Ascending aorta (tissue), 2 donors: ENCODE measurements at regions of chr16 and their contacts with region 1.

Region 1: GRCh38 chr16:30902029-30902972 is 5.9 kb downstream of the CTF1 start:
- DNase-seq: peak in 1 of 2 donors; percentile 80
- H3K4me3 ChIP-seq: peak overlapping the region; percentile 76 to 82
- H3K27ac ChIP-seq: peak overlapping the region; percentile 86 to 92
- H3K4me1 ChIP-seq: peaks cover 4 to 5% of the 10 kb centered on the region in 2 donors
- H3K27me3 ChIP-seq: no peaks in the 10 kb centered on the region
- CTCF ChIP-seq: peak in 1 of 3 experiments; percentile 75

Region 2: DNA sequence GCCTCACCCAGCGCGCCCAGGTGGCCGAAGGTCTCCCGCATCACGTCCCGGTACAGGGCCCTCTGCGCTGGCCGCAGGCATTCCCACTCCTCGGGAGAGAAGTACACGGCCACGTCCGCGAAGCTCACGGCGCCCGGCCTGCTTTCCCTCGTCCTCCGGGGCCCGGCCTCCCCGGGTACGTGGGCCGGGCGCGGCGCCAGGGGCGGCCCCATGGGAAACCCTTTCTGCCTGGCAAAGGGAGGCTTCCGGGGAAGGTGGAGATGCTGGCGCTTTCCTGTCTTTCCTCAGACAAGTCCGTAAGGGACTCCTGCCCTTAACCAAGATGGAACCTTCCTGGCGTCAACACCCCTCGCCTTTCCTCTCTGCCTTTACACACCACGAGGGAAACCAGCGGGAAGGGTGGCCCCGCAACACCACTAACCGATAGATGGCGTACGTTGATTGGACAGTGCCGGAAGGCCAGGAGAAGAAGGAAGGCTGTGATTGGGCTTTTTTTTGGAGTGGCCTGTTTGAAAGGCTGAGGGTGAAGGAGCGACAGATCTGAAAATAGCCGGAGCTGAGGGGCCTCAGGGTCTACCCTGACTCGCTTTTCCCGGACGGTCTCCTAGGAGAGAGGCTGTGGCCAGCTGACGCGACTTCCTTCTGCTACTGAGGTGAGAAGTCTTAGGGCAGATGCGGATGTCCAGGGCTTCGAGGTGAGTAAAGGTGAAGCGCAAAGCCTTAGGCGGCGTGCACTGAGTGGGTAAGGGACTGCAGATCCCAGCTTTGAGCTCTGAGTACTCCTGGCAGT is 316.7 kb before region 1 on chr16 and contains the start of gene ZNF785:
- intact Hi-C with region 1: no loop called
- DNase-seq: peak; percentile 97 to 99
- H3K4me3 ChIP-seq: peak within 1 kb of the TSS; percentile 82 to 90
- H3K27ac ChIP-seq: peak within 1 kb of the TSS; percentile 92 to 93
- H3K4me1 ChIP-seq: peaks cover 0 to 16% of the 10 kb centered on the region in 2 donors
- H3K27me3 ChIP-seq: no peaks in the 10 kb centered on the region
- CTCF ChIP-seq: peak in 2 of 3 experiments; percentile 17 to 23
- total RNA-seq, gene ZNF785: 12.1 TPM

Region 3: GRCh38 chr16:30844671-30845449 is 57.4 kb before region 1 on chr16:
- intact Hi-C with region 1: loop called (anchors 1 kb)
- DNase-seq: peak in 1 of 2 donors; percentile 89
- H3K4me3 ChIP-seq: peak overlapping the region; percentile 17 to 59
- H3K27ac ChIP-seq: peak overlapping the region in 1 of 2 donors; percentile 48
- H3K4me1 ChIP-seq: peaks cover 3 to 6% of the 10 kb centered on the region in 2 donors
- H3K27me3 ChIP-seq: no peaks in the 10 kb centered on the region
- CTCF ChIP-seq: peak; percentile 69 to 91 (median 82)

Region 4: GRCh38 chr16:30957456-30958174 is 55.3 kb after region 1 on chr16 and contains the start of gene SETD1A:
- intact Hi-C with region 1: no loop called
- DNase-seq: peak; percentile 81 to 98
- H3K4me3 ChIP-seq: peak within 1 kb of the TSS; percentile 94 to 95
- H3K27ac ChIP-seq: peak within 1 kb of the TSS; percentile 98 to 99
- H3K4me1 ChIP-seq: peaks cover 3 to 22% of the 10 kb centered on the region in 2 donors
- H3K27me3 ChIP-seq: no peaks in the 10 kb centered on the region
- CTCF ChIP-seq: peak in 1 of 3 experiments; percentile 11
- total RNA-seq, gene SETD1A: 8.3 TPM